Naive thymus-derived CD4-positive, alpha-beta T cell (primary cell): ENCODE measurements at regions of chr12 and their contacts with region 1.

Region 1: DNA sequence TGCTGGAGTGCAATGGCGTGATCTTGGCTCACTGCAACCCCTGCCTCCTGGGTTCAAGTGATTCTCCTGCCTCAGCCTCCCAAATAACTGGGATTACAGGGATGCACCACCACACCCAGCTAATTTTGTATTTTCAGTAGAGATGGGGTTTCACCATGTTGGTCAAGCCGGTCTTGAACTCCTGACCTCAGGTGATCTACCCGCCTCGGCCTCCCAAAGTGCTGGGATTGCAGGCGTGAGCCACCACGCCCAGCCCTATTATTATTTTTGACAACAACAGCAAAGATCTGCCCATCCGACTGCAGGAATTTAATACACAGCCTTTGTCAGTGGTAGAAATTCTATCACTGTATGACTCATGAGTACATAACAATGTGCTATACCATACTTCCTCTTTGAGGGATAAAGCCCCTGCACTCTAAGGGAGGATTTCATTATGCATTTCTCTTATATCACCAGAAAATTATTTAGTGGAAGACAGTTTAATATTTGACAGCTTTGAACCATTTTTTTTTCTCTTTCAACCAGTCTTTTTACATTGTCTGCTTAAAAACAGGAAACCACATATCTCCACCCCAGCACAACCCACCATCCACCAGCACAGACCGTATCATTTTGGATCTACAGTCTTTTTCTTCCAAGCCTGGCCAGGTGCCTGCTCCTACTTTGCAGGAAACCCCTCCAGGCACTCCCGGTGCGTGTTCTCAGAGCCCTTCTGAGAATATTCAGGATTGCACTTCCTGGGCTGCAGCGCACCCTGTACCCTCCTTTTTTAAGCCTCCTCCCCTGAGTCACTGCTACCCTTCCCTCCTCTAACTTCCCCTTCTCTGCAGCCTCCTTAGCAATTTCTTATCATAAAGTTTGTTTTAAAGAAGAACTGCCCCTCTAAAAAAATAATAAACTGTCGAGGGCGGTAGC is 594 bp downstream of the ARHGDIB start:
- DNase-seq: peak in 7 of 9 donors; percentile 41 to 82 (median 77)
- ATAC-seq: peak; percentile 54
- H3K4me3 ChIP-seq: peak overlapping the region; percentile 84
- H3K4me3 Mint-ChIP-seq: peak overlapping the region; percentile 88 to 100 (median 97)
- H3K27ac ChIP-seq: peak overlapping the region; percentile 96
- H3K27ac Mint-ChIP-seq: peak overlapping the region; percentile 94 to 100 (median 97)
- H3K4me1 ChIP-seq: peaks cover 42 to 50% of the 10 kb centered on the region in 2 donors
- H3K4me1 Mint-ChIP-seq: peaks cover 42 to 68% (median 61%) of the 10 kb centered on the region in 7 donors
- H3K27me3 ChIP-seq: no peaks in the 10 kb centered on the region
- H3K27me3 Mint-ChIP-seq: peaks cover 0 to 2% (median 0%) of the 10 kb centered on the region in 5 donors

Region 2: DNA sequence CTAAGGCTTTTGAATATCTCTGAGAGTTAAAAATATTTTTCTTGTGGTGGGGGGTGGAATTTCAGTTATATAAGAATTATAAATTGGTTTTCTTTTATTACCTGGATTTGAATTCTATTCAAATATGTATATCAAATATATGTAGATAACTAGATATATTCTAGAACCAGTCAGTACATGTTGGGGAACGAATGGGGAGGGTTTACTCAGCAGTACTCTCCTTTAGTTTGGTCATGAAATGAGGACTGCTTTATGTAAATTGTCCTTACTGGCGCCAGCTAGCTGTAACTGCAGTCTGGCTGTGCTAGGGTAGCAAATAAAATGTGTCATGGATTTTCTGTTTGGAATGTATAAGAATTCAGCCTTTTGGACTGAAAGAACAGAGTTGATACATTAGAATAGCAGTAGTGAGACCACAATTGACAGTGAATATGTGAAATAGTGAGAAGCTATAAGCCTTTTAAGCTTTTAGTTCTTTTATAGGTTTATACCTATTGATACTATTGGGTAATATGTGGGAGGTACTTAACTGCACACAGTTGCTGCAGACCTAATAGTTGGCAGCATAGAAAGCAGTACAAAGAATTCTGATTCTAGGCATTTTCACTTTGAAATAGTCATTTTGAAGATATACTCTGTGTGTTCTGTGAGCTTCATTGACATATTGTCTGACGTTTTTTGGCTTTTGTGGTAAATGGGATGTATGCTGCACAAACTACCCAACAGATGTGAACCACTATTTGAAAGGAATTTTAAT is 566.3 kb before region 1 on chr12:
- CTCF ChIA-PET with region 1: no interaction called
- POLR2A ChIA-PET with region 1: interaction called, 3 read pairs
- intact Hi-C with region 1: loop called (anchors 5 kb)
- DNase-seq: peak in 7 of 9 donors; percentile 57 to 82 (median 71)
- ATAC-seq: peak; percentile 86
- H3K4me3 ChIP-seq: peak overlapping the region; percentile 33
- H3K4me3 Mint-ChIP-seq: peak overlapping the region; percentile 49 to 87 (median 76)
- H3K27ac ChIP-seq: peak overlapping the region; percentile 75
- H3K27ac Mint-ChIP-seq: peak overlapping the region; percentile 83 to 97 (median 95)
- H3K4me1 ChIP-seq: peaks cover 62 to 84% of the 10 kb centered on the region in 2 donors
- H3K4me1 Mint-ChIP-seq: peaks cover 47 to 99% (median 91%) of the 10 kb centered on the region in 7 donors
- H3K27me3 ChIP-seq: no peaks in the 10 kb centered on the region
- H3K27me3 Mint-ChIP-seq: no peaks in the 10 kb centered on the region

Region 3: GRCh38 chr12:14884458-14884878 is 76.3 kb before region 1 on chr12:
- CTCF ChIA-PET with region 1: no interaction called
- POLR2A ChIA-PET with region 1: interaction called, 5 read pairs
- intact Hi-C with region 1: loop called in 1 of 2 experiments (anchors 1 kb)
- DNase-seq: peak in 8 of 9 donors; percentile 59 to 93 (median 88)
- ATAC-seq: peak; percentile 95
- H3K4me3 ChIP-seq: no peak overlapping the region
- H3K4me3 Mint-ChIP-seq: peak overlapping the region in 9 of 10 donors; percentile 62 to 83 (median 77)
- H3K27ac ChIP-seq: peak overlapping the region; percentile 60
- H3K27ac Mint-ChIP-seq: peak overlapping the region in 8 of 9 donors; percentile 49 to 95 (median 92)
- H3K4me1 ChIP-seq: peaks cover 0 to 27% of the 10 kb centered on the region in 2 donors
- H3K4me1 Mint-ChIP-seq: peaks cover 15 to 75% (median 60%) of the 10 kb centered on the region in 7 donors
- H3K27me3 ChIP-seq: no peaks in the 10 kb centered on the region
- H3K27me3 Mint-ChIP-seq: peaks cover 0 to 29% (median 8%) of the 10 kb centered on the region in 5 donors

Region 4: DNA sequence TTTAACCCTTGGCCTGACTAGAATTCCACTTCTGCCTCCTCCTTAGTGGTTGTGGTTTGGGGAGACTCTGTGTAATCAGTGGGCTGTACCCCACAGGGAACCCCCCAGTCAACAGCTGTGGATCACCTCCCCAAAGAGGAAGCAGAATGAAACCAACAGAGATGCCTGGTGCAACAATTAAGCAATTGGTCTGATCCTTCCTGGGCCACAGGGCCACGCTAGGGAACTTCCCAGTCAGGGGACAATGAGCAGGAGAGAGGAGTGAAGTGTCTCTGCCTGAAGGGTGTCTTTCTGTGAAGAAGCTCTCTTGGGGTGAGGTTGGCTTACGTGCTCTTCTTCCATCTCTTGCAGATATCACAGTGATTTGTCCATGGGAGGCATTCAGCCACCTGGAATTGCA is 20.2 kb after region 1 on chr12:
- CTCF ChIA-PET with region 1: no interaction called
- POLR2A ChIA-PET with region 1: interaction called, 17 read pairs
- intact Hi-C with region 1: loop called (anchors 1 to 2 kb)
- DNase-seq: no peak
- ATAC-seq: peak; percentile 84
- H3K4me3 ChIP-seq: no peak overlapping the region
- H3K4me3 Mint-ChIP-seq: peak overlapping the region in 6 of 10 donors; percentile 10 to 62 (median 18)
- H3K27ac ChIP-seq: no peak overlapping the region
- H3K27ac Mint-ChIP-seq: peak overlapping the region in 6 of 9 donors; percentile 1 to 78 (median 18)
- H3K4me1 ChIP-seq: peaks cover 17 to 50% of the 10 kb centered on the region in 2 donors
- H3K4me1 Mint-ChIP-seq: peaks cover 41 to 75% (median 68%) of the 10 kb centered on the region in 7 donors
- H3K27me3 ChIP-seq: no peaks in the 10 kb centered on the region
- H3K27me3 Mint-ChIP-seq: no peaks in the 10 kb centered on the region

Region 5: GRCh38 chr12:15477761-15478160 is 517.0 kb after region 1 on chr12:
- CTCF ChIA-PET with region 1: no interaction called
- POLR2A ChIA-PET with region 1: no interaction called
- intact Hi-C with region 1: no loop called
- DNase-seq: no peak
- ATAC-seq: no peak
- H3K4me3 ChIP-seq: no peak overlapping the region
- H3K4me3 Mint-ChIP-seq: no peak overlapping the region
- H3K27ac ChIP-seq: no peak overlapping the region
- H3K27ac Mint-ChIP-seq: no peak overlapping the region
- H3K4me1 ChIP-seq: no peaks in the 10 kb centered on the region
- H3K4me1 Mint-ChIP-seq: no peaks in the 10 kb centered on the region
- H3K27me3 ChIP-seq: no peaks in the 10 kb centered on the region
- H3K27me3 Mint-ChIP-seq: peaks cover 2 to 21% (median 14%) of the 10 kb centered on the region in 5 donors

Region 6: DNA sequence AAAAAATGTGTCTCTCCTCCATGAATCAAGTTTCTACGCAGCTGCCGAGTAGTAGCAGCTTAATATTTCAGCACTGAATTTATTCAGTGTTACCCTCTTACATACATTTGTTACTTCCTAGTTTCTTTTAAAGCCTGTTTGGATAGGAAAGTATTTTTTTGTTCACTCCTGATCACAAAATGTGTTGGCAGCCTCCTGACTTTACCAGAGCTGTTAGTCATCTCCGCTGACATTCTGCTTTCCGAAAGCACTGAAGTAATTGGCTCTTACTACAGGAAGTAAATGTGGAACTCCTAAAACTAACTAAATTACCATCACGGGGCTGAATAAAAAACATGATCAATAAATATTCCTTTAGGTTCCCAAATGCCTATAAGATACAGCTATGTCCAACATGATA is 602.9 kb after region 1 on chr12:
- CTCF ChIA-PET with region 1: no interaction called
- POLR2A ChIA-PET with region 1: no interaction called
- intact Hi-C with region 1: loop called in 1 of 2 experiments (anchors 5 kb)
- DNase-seq: peak in 6 of 9 donors; percentile 39 to 54 (median 50)
- ATAC-seq: peak; percentile 84
- H3K4me3 ChIP-seq: peak overlapping the region; percentile 38
- H3K4me3 Mint-ChIP-seq: peak overlapping the region; percentile 54 to 87 (median 82)
- H3K27ac ChIP-seq: peak overlapping the region; percentile 82
- H3K27ac Mint-ChIP-seq: peak overlapping the region; percentile 87 to 96 (median 94)
- H3K4me1 ChIP-seq: peaks cover 0 to 37% of the 10 kb centered on the region in 2 donors
- H3K4me1 Mint-ChIP-seq: peaks cover 36 to 89% (median 77%) of the 10 kb centered on the region in 7 donors
- H3K27me3 ChIP-seq: no peaks in the 10 kb centered on the region
- H3K27me3 Mint-ChIP-seq: peaks cover 0 to 5% (median 0%) of the 10 kb centered on the region in 5 donors